ENCODE measurements at regions of chr1 and their contacts with region 1.

Region 1: DNA sequence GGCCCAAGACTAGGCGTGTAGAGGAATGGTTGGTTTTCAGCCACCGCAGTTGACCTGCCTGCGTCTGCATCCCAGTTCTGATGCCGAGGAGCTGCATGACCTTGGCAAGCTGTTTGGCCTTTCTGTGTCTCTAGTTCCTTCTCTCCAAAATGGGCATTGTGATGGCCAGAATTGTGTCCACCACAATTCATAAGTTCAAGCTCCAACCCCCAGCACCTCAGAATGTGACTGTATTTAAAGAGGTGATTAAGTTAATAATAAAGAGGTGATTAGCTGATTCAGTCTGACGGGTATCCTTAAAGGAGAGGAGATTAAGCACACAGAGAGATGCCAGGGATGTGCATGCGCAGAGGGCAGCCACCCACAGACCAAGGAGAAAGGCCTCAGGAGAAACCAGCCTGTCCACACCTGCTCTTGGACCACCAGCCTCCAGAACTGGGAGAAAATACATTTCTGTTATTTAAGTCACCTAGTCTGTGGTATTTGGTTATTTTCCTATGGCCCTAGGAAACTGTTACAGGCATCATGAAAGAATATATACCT is 28.5 kb downstream of the MAB21L3 start:
- DNase-seq: no peak
- ATAC-seq: no peak
- H3K4me3 ChIP-seq: no peak overlapping the region
- H3K4me3 Mint-ChIP-seq: no peak overlapping the region
- H3K27ac ChIP-seq: no peak overlapping the region
- H3K27ac Mint-ChIP-seq: no peak overlapping the region
- H3K4me1 ChIP-seq: no peaks in the 10 kb centered on the region
- H3K4me1 Mint-ChIP-seq: peaks cover 5% of the 10 kb centered on the region
- H3K27me3 ChIP-seq: no peaks in the 10 kb centered on the region
- H3K27me3 Mint-ChIP-seq: peaks cover 4% of the 10 kb centered on the region
- CTCF ChIP-seq: no peak

Region 2: DNA sequence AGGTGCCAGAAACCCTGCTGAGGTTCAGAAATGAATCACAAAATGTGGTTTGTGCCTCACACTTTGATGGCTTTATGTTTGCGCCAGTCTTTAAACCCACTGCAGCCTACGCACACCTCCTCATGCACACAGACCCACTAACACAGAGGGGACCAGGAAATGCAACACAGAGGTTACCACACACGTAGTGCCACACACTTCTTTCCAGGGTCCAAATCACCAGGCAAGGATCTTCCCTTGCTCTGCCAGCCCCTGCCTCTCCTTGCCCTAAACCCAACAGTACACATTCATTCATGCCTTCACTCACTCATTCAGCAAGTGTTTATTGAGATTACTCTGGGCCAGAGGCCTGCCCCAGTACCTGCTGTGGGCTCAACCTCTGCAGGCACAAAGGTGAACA is 11.0 kb before region 1 on chr1:
- CTCF ChIA-PET with region 1: interaction called, 18 read pairs
- POLR2A ChIA-PET with region 1: interaction called, 3 read pairs
- intact Hi-C with region 1: no loop called
- DNase-seq: peak in 7 of 9 experiments; percentile 23 to 71 (median 48)
- ATAC-seq: peak; percentile 85
- H3K4me3 ChIP-seq: no peak overlapping the region
- H3K4me3 Mint-ChIP-seq: peak overlapping the region; percentile 17
- H3K27ac ChIP-seq: no peak overlapping the region
- H3K27ac Mint-ChIP-seq: peak overlapping the region; percentile 41
- H3K4me1 ChIP-seq: peaks cover 38% of the 10 kb centered on the region
- H3K4me1 Mint-ChIP-seq: peaks cover 41% of the 10 kb centered on the region
- H3K27me3 ChIP-seq: no peaks in the 10 kb centered on the region
- H3K27me3 Mint-ChIP-seq: peaks cover 2% of the 10 kb centered on the region
- CTCF ChIP-seq: no peak

Region 3: GRCh38 chr1:116182019-116182714 is 42.5 kb after region 1 on chr1:
- CTCF ChIA-PET with region 1: interaction called, 11 read pairs
- POLR2A ChIA-PET with region 1: no interaction called
- intact Hi-C with region 1: no loop called
- DNase-seq: no peak
- ATAC-seq: no peak
- H3K4me3 ChIP-seq: no peak overlapping the region
- H3K4me3 Mint-ChIP-seq: no peak overlapping the region
- H3K27ac ChIP-seq: no peak overlapping the region
- H3K27ac Mint-ChIP-seq: no peak overlapping the region
- H3K4me1 ChIP-seq: no peaks in the 10 kb centered on the region
- H3K4me1 Mint-ChIP-seq: no peaks in the 10 kb centered on the region
- H3K27me3 ChIP-seq: no peaks in the 10 kb centered on the region
- H3K27me3 Mint-ChIP-seq: peaks cover 5% of the 10 kb centered on the region
- CTCF ChIP-seq: no peak

Region 4: DNA sequence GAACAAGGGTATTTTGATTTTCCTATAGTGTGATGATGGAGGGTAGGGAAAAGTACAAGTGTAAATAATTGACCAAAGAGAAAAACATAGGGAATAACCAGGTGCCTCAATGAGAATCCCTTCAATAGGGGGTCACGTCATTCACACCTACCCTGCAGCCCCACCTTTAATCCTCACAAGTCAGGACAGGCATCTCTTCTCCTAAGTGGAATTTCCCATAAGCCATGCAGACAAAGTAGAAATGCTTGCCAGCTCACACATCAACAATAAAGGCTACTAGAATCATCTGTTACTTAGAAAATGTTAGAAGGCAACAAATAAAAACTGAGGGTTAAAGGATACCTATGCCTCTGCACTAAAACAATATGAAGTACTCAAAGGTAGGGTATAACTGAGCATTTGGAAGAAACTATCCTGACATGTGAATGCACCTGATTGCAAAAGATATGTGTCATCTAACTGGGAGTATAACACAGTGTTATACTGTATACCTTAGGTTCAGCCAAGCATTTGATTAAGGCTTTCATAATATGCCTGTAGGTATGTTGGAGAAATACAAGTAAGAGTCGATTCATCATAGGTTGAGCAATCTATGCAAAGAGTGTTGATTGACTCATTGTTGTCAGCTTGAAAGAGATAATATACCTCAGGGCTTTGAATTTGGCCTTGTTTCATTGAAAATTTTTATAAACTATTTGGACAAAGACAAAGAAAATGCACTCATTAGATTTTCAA is 201.0 kb after region 1 on chr1:
- CTCF ChIA-PET with region 1: interaction called, 12 read pairs
- POLR2A ChIA-PET with region 1: no interaction called
- intact Hi-C with region 1: loop called in 1 of 2 experiments (anchors 2 kb)
- DNase-seq: no peak
- ATAC-seq: no peak
- H3K4me3 ChIP-seq: no peak overlapping the region
- H3K4me3 Mint-ChIP-seq: no peak overlapping the region
- H3K27ac ChIP-seq: no peak overlapping the region
- H3K27ac Mint-ChIP-seq: no peak overlapping the region
- H3K4me1 ChIP-seq: peaks cover 13% of the 10 kb centered on the region
- H3K4me1 Mint-ChIP-seq: peaks cover 31% of the 10 kb centered on the region
- H3K27me3 ChIP-seq: no peaks in the 10 kb centered on the region
- H3K27me3 Mint-ChIP-seq: no peaks in the 10 kb centered on the region
- CTCF ChIP-seq: no peak

Region 5: GRCh38 chr1:116418091-116418830 is 278.6 kb after region 1 on chr1:
- CTCF ChIA-PET with region 1: interaction called, 3 read pairs
- POLR2A ChIA-PET with region 1: interaction called, 3 read pairs
- intact Hi-C with region 1: loop called in 1 of 2 experiments (anchors 1 kb)
- DNase-seq: peak; percentile 79 to 93 (median 87)
- ATAC-seq: peak; percentile 98
- H3K4me3 ChIP-seq: peak overlapping the region; percentile 81 to 83
- H3K4me3 Mint-ChIP-seq: peak overlapping the region; percentile 89
- H3K27ac ChIP-seq: peak overlapping the region; percentile 78 to 80
- H3K27ac Mint-ChIP-seq: peak overlapping the region; percentile 96
- H3K4me1 ChIP-seq: peaks cover 29% of the 10 kb centered on the region
- H3K4me1 Mint-ChIP-seq: peaks cover 35% of the 10 kb centered on the region
- H3K27me3 ChIP-seq: no peaks in the 10 kb centered on the region
- H3K27me3 Mint-ChIP-seq: no peaks in the 10 kb centered on the region
- CTCF ChIP-seq: no peak

Region 6: GRCh38 chr1:116504308-116505156 is 364.9 kb after region 1 on chr1:
- CTCF ChIA-PET with region 1: interaction called, 108 read pairs
- POLR2A ChIA-PET with region 1: interaction called, 8 read pairs
- intact Hi-C with region 1: loop called (anchors 1 kb)
- DNase-seq: peak; percentile 71 to 97 (median 88)
- ATAC-seq: peak; percentile 93
- H3K4me3 ChIP-seq: no peak overlapping the region
- H3K4me3 Mint-ChIP-seq: peak overlapping the region; percentile 19
- H3K27ac ChIP-seq: peak overlapping the region; percentile 22 to 92
- H3K27ac Mint-ChIP-seq: peak overlapping the region; percentile 91
- H3K4me1 ChIP-seq: peaks cover 26% of the 10 kb centered on the region
- H3K4me1 Mint-ChIP-seq: peaks cover 42% of the 10 kb centered on the region
- H3K27me3 ChIP-seq: no peaks in the 10 kb centered on the region
- H3K27me3 Mint-ChIP-seq: no peaks in the 10 kb centered on the region
- CTCF ChIP-seq: no peak